Activated T-helper 1 cell treated with anti-CD3 and anti-CD28 coated beads, Interleukin-12 subunit alpha, Interleukin-12 subunit beta, Interleukin-2, Interleukin-4 antibody, amounts not matched to agents 30 ng/mL and 10 ng/mL and 1 ng/mL, durations not matched to agents 14 hours and 24 hours and 36 hours (primary cell): ENCODE measurements at regions of chr1 and their contacts with region 1.

Region 1: DNA sequence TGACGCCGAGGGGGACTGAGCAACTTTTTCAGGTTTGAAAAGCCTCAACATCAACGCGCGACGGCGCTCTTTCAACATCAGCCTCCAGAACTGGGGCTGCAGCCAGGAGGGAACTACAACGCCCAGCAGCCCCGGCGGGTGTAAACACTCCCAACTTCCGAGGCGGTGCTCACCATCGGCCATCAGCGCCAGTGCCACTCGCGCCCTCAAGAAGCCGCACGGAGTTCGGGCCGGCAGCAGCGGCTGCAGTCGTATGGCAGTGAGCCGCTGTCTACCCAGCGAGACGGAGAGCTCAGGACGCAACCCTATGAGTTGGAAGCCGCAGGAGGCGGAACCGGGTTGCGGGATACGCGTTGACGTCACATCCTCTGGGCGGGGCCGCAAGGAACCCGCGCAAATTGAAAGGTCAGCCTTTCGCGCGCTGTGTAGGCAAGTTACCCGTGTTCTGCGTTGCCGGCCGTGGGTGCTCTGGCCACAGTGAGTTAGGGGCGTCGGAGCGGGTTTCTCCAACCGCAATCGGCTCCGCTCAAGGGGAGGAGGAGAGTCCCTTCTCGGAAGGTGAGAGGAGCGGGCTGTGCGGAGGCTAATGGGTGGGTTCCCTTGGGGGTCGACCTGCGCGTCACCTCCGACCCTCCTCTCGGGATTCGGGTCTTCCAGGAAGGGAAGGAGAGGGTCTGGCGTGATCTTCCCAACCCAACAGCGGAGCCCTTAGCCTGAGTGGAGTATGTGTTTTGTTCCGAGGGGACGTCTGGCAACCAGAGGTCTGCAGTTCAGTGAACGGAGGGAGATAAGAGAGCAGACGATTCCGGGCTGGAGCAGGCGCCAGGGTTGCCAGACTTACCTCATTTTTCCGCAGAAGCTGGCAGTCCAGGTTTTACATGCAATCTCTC is at the start of gene EXO1:
- DNase-seq: peak; percentile 85
- H3K4me3 Mint-ChIP-seq: peak within 1 kb of the TSS; percentile 97
- H3K27ac Mint-ChIP-seq: peak within 1 kb of the TSS; percentile 98
- H3K4me1 Mint-ChIP-seq: peaks cover 36% of the 10 kb centered on the region
- H3K27me3 Mint-ChIP-seq: peaks cover 2% of the 10 kb centered on the region
- total RNA-seq, gene EXO1: 52.2 and 58.0 TPM in 2 replicates

Region 2: DNA sequence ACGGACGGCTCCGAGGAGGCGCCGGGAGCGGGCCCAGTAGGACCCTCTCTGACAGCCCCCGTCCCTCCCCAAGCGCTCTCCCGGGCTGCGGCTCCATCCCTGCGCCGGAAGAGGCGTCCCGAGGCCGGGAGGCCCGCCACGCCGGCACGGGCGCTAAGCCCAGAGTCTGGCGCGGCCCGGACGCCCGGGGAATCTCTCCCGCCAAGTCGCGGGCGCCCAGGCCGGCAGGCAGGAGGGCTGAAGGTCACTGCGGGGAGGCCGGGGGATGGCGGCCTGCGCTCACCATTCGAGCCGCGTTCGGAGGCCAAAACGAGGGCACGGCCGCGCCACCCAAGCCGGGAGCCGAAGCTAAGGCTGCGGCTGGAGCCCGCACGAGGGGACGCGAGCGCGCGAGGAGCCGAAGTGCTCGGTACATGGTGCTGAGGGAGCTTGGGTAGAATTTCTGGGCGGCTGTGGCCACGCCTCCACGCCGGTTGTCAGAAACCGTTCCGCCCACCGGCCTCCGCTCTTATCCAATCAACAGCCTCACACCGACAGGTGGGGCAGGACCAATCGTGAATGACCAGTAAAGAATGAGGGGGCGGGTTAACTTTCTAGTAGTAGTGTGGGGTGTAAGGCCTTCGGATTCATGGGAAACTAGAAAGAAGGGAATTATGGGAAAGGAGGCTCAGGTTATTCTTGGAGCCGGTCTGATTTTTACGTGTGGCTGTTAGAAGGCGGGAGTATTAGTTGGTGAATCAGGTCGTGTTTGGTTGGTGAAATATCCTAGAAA is 328.5 kb before region 1 on chr1 and contains the start of gene FH:
- intact Hi-C with region 1: loop called (anchors 1 kb)
- DNase-seq: peak; percentile 91
- H3K4me3 Mint-ChIP-seq: peak within 1 kb of the TSS; percentile 91
- H3K27ac Mint-ChIP-seq: peak within 1 kb of the TSS; percentile 82
- H3K4me1 Mint-ChIP-seq: peaks cover 26% of the 10 kb centered on the region
- H3K27me3 Mint-ChIP-seq: peaks cover 26% of the 10 kb centered on the region
- total RNA-seq, gene FH: 94.5 and 101 TPM in 2 replicates

Region 3: GRCh38 chr1:241640029-241640818 is 207.8 kb before region 1 on chr1 and contains the starts of genes CHML and OPN3:
- intact Hi-C with region 1: loop called (anchors 1 kb)
- DNase-seq: peak; percentile 90
- H3K4me3 Mint-ChIP-seq: peak within 1 kb of the TSS; percentile 84
- H3K27ac Mint-ChIP-seq: peak within 1 kb of the TSS; percentile 85
- H3K4me1 Mint-ChIP-seq: peaks cover 54% of the 10 kb centered on the region
- H3K27me3 Mint-ChIP-seq: no peaks in the 10 kb centered on the region
- total RNA-seq, gene CHML: 17.8 and 20.8 TPM in 2 replicates
- total RNA-seq, gene OPN3: 9.5 and 11.1 TPM in 2 replicates

Region 4: DNA sequence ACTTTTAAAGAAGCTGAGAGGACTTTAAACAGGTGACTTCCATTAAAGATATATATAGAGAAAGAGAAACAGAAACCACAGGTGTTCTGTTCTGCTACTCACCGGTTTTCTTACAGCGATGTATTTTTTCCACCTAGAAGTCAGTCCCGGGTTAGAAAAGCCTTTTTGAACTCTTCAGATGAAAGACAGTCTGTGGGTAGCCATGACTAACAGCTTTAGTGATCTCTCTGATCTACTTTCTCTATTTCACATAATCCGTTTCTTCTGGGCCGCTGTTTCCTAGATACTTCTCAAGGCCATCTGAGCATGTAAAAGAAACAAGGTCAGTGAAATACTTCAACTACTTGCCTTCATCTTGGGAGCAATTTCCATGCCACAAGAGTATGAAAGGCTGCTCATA is 170.8 kb before region 1 on chr1:
- intact Hi-C with region 1: loop called (anchors 1 kb)
- DNase-seq: peak; percentile 32
- H3K4me3 Mint-ChIP-seq: peak overlapping the region; percentile 43
- H3K27ac Mint-ChIP-seq: peak overlapping the region; percentile 35
- H3K4me1 Mint-ChIP-seq: peaks cover 19% of the 10 kb centered on the region
- H3K27me3 Mint-ChIP-seq: peaks cover 5% of the 10 kb centered on the region

Region 5: GRCh38 chr1:241883159-241883558 is 35.1 kb after region 1 on chr1:
- intact Hi-C with region 1: loop called (anchors 5 kb)
- DNase-seq: no peak
- H3K4me3 Mint-ChIP-seq: no peak overlapping the region
- H3K27ac Mint-ChIP-seq: no peak overlapping the region
- H3K4me1 Mint-ChIP-seq: peaks cover 22% of the 10 kb centered on the region
- H3K27me3 Mint-ChIP-seq: no peaks in the 10 kb centered on the region

Region 6: GRCh38 chr1:241998412-241998921 is 150.4 kb after region 1 on chr1:
- intact Hi-C with region 1: loop called (anchors 1 kb)
- DNase-seq: peak; percentile 23
- H3K4me3 Mint-ChIP-seq: peak overlapping the region; percentile 48
- H3K27ac Mint-ChIP-seq: no peak overlapping the region
- H3K4me1 Mint-ChIP-seq: peaks cover 4% of the 10 kb centered on the region
- H3K27me3 Mint-ChIP-seq: peaks cover 1% of the 10 kb centered on the region